ENCODE measurements at regions of chr4 and their contacts with region 1.

Region 1: DNA sequence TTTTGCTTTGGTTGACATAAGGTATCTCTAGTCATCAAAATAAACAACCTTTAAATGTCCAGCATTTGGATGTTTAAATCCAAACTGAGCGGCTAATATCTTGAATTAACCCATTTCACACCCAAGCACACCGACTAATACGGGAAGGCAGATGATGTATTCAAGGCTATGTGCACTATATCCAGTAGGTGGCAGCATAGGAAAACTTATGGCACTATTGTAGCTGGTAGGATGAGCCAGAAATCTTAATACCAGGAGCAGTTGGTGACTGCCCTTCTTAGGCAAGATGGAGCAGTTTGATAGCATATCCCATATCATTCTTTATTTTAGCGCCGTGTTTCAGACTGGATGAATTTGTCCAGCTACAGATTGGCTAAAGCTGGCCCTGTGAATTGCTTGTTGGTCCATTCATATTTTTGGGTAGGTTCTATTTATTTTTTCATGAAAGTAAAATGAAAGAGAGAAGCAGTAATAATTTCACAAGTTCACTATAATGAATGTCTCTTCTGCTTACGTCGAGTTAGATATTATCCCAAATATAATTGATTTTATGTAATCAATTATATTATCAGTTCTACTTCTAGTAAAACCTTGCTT is 24.4 kb downstream of the UCHL1 start:
- DNase-seq: peak; percentile 53
- H3K4me3 Mint-ChIP-seq: no peak overlapping the region
- H3K27ac Mint-ChIP-seq: no peak overlapping the region
- H3K4me1 Mint-ChIP-seq: peaks cover 13% of the 10 kb centered on the region
- H3K27me3 Mint-ChIP-seq: no peaks in the 10 kb centered on the region
- CTCF ChIP-seq: peak; percentile 37

Region 2: DNA sequence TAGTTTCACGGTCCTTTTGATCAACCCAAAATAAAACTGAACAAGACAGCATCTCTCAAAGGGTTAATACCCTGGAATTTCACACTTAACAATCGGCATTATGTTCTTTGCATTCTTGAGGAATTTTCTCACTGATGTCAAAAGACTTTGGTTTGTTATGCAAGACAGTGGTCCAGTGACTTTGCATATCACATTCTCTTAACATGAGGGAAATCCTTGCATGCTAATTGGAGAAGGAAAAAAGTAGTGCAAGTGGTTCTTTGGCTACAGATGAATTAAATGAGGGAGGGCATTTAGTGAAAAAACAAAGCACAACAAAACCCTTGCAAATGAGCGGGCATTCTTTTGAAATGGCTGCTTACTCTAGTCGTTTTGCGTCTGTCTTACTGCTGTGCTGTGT is 151.7 kb after region 1 on chr4:
- CTCF ChIA-PET with region 1: no interaction called
- intact Hi-C with region 1: loop called (anchors 10 kb)
- DNase-seq: no peak
- H3K4me3 Mint-ChIP-seq: no peak overlapping the region
- H3K27ac Mint-ChIP-seq: peak overlapping the region; percentile 56
- H3K4me1 Mint-ChIP-seq: peaks cover 44% of the 10 kb centered on the region
- H3K27me3 Mint-ChIP-seq: no peaks in the 10 kb centered on the region
- CTCF ChIP-seq: no peak

Region 3: GRCh38 chr4:41505161-41505661 is 224.1 kb after region 1 on chr4:
- CTCF ChIA-PET with region 1: interaction called, 4 read pairs
- intact Hi-C with region 1: loop called (anchors 5 kb)
- DNase-seq: peak; percentile 39
- H3K4me3 Mint-ChIP-seq: no peak overlapping the region
- H3K27ac Mint-ChIP-seq: peak overlapping the region; percentile 91
- H3K4me1 Mint-ChIP-seq: peaks cover 50% of the 10 kb centered on the region
- H3K27me3 Mint-ChIP-seq: no peaks in the 10 kb centered on the region
- CTCF ChIP-seq: no peak

Region 4: DNA sequence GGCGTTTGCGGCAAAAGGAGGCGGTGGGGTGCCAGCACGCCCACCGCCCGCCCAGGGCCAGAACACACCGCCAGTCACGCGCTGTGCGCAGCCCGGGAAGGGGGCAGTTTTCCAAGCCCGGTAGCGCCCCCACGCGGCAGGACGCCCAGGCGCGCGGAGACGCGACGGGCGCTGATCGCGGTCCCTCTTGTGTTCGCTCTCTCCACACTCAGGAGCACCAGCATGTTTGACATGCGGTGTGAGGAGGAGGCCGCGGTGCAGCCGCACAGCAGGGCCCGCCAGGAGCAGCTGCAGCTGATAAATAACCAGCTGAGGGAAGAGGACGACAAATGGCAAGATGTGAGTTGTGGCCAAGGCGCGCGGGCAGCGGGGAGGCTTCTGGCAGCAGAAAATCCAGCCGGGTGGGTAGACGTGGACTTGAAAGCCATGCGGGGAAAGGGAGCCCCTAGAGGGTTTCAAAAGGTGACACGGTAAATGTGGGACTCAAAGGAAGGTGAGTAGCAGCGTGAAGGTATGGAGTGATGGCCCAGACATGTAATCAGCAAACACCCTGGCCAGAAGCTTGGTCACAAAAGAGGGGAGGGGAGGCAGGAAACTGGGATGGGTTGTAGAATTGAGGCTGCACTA is 363.3 kb after region 1 on chr4:
- CTCF ChIA-PET with region 1: interaction called, 5 read pairs
- intact Hi-C with region 1: loop called (anchors 5 kb)
- DNase-seq: peak; percentile 65
- H3K4me3 Mint-ChIP-seq: peak overlapping the region; percentile 41
- H3K27ac Mint-ChIP-seq: peak overlapping the region; percentile 47
- H3K4me1 Mint-ChIP-seq: peaks cover 8% of the 10 kb centered on the region
- H3K27me3 Mint-ChIP-seq: no peaks in the 10 kb centered on the region
- CTCF ChIP-seq: peak; percentile 65

Region 5: GRCh38 chr4:41661442-41662076 is 380.4 kb after region 1 on chr4:
- CTCF ChIA-PET with region 1: interaction called, 14 read pairs
- intact Hi-C with region 1: loop called (anchors 1 kb)
- DNase-seq: peak; percentile 56
- H3K4me3 Mint-ChIP-seq: no peak overlapping the region
- H3K27ac Mint-ChIP-seq: no peak overlapping the region
- H3K4me1 Mint-ChIP-seq: peaks cover 11% of the 10 kb centered on the region
- H3K27me3 Mint-ChIP-seq: no peaks in the 10 kb centered on the region
- CTCF ChIP-seq: peak; percentile 63

Region 6: GRCh38 chr4:41887821-41888686 is 606.9 kb after region 1 on chr4:
- CTCF ChIA-PET with region 1: no interaction called
- intact Hi-C with region 1: loop called (anchors 2 kb)
- DNase-seq: peak; percentile 34
- H3K4me3 Mint-ChIP-seq: no peak overlapping the region
- H3K27ac Mint-ChIP-seq: no peak overlapping the region
- H3K4me1 Mint-ChIP-seq: no peaks in the 10 kb centered on the region
- H3K27me3 Mint-ChIP-seq: no peaks in the 10 kb centered on the region
- CTCF ChIP-seq: peak; percentile 41